Transverse colon (tissue), 4 donors: ENCODE measurements at regions of chr3 and their contacts with region 1.

Region 1: GRCh38 chr3:182755712-182756111 is 37.6 kb upstream of the ATP11B start:
- DNase-seq: no peak
- H3K4me3 ChIP-seq: no peak overlapping the region
- H3K27ac ChIP-seq: no peak overlapping the region
- H3K4me1 ChIP-seq: peaks cover 0 to 7% (median 3%) of the 10 kb centered on the region in 4 donors
- H3K27me3 ChIP-seq: no peaks in the 10 kb centered on the region
- CTCF ChIP-seq: no peak
- EP300 ChIP-seq: no peak
- POLR2A ChIP-seq: no peak

Region 2: GRCh38 chr3:182697345-182697919 is 58.3 kb before region 1 on chr3:
- in situ Hi-C with region 1: no loop called
- intact Hi-C with region 1: loop called (anchors 2 kb)
- DNase-seq: no peak
- H3K4me3 ChIP-seq: no peak overlapping the region
- H3K27ac ChIP-seq: no peak overlapping the region
- H3K4me1 ChIP-seq: no peaks in the 10 kb centered on the region
- H3K27me3 ChIP-seq: peaks cover 8% of the 10 kb centered on the region
- CTCF ChIP-seq: no peak
- EP300 ChIP-seq: no peak
- POLR2A ChIP-seq: no peak